ENCODE measurements at regions of chr19 and their contacts with region 1.

Region 1: DNA sequence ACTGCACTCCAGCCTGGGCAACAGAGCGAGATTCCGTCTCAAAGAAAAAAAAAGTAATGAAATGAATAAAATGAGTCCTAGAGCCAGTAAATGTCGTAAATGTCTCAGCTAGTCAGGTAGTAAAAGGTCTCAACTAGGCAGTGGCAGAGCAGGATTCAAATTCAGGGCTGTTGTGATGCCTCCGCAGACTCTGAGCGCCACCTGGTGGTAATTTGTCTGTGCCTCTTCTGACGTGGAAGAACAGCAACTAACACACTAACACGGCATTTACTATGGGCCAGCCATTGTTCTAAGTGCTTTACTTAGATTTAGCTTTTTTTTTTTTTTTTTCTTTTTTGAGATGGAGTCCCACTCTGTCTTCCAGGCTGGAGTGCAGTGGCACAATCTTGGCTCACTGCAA is 30.2 kb downstream of the CYP2F1 start:
- DNase-seq: peak; percentile 85 to 94
- ATAC-seq: peak; percentile 94
- H3K4me3 ChIP-seq: no peak overlapping the region
- H3K27ac ChIP-seq: no peak overlapping the region; a peak in 1 of 6 replicates
- H3K4me1 ChIP-seq: no peaks in the 10 kb centered on the region
- CTCF ChIP-seq: peak; percentile 99
- EP300 ChIP-seq: no peak
- POLR2A ChIP-seq: no peak
- RAD21 ChIP-seq: peak; percentile 99 to 100

Region 2: DNA sequence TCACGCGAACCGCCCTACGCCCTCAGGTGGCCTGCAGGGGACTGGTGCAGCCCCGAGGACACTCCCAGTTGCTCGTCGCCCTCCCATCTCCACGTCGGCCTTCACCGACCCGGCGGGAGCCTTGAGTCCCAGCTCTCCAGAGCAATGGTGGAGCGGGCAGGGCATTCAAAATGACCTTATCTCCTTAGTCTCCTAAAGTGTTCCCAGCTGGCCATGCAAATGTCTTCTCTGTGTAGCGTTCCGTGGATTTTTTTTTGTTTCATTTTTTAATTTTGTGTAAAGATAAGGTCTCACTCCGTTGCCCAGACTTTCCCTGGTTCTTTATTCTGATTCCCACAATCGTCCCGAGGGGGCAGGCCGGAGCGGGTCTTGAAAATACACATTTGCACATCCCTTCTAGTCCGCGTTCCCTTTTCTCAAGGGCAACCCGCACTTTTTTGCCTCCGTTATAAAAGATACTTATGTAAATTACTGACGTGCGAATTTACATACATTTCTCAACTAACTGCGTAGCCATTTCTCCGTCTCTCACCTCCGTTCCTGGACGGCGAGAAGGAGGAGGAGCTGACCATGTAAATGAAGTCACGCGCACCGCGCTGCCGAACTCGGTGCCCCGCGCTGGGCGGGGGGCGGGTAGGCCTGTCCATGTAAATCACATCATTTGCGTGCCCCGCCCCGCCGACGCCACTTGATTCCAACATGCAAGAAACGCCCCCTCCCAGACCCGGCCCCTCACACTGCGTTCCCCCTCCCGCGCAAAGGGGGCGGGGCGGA is 346.0 kb before region 1 on chr19:
- CTCF ChIA-PET with region 1: interaction called, 13 read pairs
- POLR2A ChIA-PET with region 1: no interaction called
- DNase-seq: peak; percentile 99 to 100
- ATAC-seq: peak; percentile 86 to 92
- H3K4me3 ChIP-seq: peak overlapping the region; percentile 84
- H3K27ac ChIP-seq: peak overlapping the region; percentile 95 to 96
- H3K4me1 ChIP-seq: peaks cover 42% of the 10 kb centered on the region
- CTCF ChIP-seq: peak; percentile 67
- EP300 ChIP-seq: no peak
- POLR2A ChIP-seq: 0 out of 2 replicates have a peak, but pooled peaks have one; percentile 23
- RAD21 ChIP-seq: 0 out of 5 replicates have a peak, but pooled peaks have one; percentile 11 to 33

Region 3: GRCh38 chr19:40974633-40975037 is 169.8 kb before region 1 on chr19:
- CTCF ChIA-PET with region 1: interaction called, 19 read pairs
- POLR2A ChIA-PET with region 1: no interaction called
- DNase-seq: peak; percentile 89 to 90
- ATAC-seq: peak; percentile 81 to 96; a peak in 5 of 6 replicates
- H3K4me3 ChIP-seq: no peak overlapping the region
- H3K27ac ChIP-seq: no peak overlapping the region
- H3K4me1 ChIP-seq: no peaks in the 10 kb centered on the region
- CTCF ChIP-seq: peak; percentile 99
- EP300 ChIP-seq: no peak
- POLR2A ChIP-seq: no peak
- RAD21 ChIP-seq: peak; percentile 85 to 87

Region 4: GRCh38 chr19:41112728-41113290 is 31.6 kb before region 1 on chr19:
- CTCF ChIA-PET with region 1: interaction called, 11 read pairs
- POLR2A ChIA-PET with region 1: no interaction called
- DNase-seq: no peak
- ATAC-seq: no peak
- H3K4me3 ChIP-seq: no peak overlapping the region
- H3K27ac ChIP-seq: no peak overlapping the region
- H3K4me1 ChIP-seq: no peaks in the 10 kb centered on the region
- CTCF ChIP-seq: no peak
- EP300 ChIP-seq: no peak
- POLR2A ChIP-seq: no peak
- RAD21 ChIP-seq: no peak

Region 5: DNA sequence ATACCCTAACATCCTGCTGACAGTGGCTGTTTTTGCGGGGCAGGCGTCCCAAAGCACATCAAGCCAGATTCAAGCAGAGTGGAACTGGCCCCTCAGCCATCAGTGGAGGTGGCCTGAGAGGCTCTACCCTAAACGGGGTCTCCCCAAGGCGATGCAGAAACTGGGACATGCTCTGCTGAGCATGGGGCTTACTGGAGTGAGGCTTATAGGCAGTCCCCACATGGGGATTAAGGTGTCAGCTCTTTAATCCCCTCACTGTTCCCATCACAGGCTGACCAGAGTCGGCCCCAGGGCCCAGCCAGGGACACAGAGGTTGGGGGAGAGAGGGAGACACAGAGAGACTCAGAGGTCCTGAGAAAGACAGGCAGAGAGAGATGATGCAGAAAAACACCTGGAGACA is 13.2 kb before region 1 on chr19:
- CTCF ChIA-PET with region 1: interaction called, 56 read pairs
- POLR2A ChIA-PET with region 1: no interaction called
- DNase-seq: no peak
- ATAC-seq: no peak
- H3K4me3 ChIP-seq: no peak overlapping the region
- H3K27ac ChIP-seq: no peak overlapping the region; a peak in 1 of 6 replicates
- H3K4me1 ChIP-seq: peaks cover 15% of the 10 kb centered on the region
- CTCF ChIP-seq: no peak
- EP300 ChIP-seq: no peak
- POLR2A ChIP-seq: no peak
- RAD21 ChIP-seq: no peak

Region 6: GRCh38 chr19:41166944-41167804 is 22.8 kb after region 1 on chr19:
- CTCF ChIA-PET with region 1: interaction called, 49 read pairs
- POLR2A ChIA-PET with region 1: no interaction called
- DNase-seq: no peak
- ATAC-seq: no peak; a peak in 2 of 6 replicates
- H3K4me3 ChIP-seq: no peak overlapping the region
- H3K27ac ChIP-seq: no peak overlapping the region
- H3K4me1 ChIP-seq: peaks cover 4% of the 10 kb centered on the region; the same call in 2 of the 3 replicates
- CTCF ChIP-seq: no peak
- EP300 ChIP-seq: no peak
- POLR2A ChIP-seq: no peak
- RAD21 ChIP-seq: no peak

Region 7: DNA sequence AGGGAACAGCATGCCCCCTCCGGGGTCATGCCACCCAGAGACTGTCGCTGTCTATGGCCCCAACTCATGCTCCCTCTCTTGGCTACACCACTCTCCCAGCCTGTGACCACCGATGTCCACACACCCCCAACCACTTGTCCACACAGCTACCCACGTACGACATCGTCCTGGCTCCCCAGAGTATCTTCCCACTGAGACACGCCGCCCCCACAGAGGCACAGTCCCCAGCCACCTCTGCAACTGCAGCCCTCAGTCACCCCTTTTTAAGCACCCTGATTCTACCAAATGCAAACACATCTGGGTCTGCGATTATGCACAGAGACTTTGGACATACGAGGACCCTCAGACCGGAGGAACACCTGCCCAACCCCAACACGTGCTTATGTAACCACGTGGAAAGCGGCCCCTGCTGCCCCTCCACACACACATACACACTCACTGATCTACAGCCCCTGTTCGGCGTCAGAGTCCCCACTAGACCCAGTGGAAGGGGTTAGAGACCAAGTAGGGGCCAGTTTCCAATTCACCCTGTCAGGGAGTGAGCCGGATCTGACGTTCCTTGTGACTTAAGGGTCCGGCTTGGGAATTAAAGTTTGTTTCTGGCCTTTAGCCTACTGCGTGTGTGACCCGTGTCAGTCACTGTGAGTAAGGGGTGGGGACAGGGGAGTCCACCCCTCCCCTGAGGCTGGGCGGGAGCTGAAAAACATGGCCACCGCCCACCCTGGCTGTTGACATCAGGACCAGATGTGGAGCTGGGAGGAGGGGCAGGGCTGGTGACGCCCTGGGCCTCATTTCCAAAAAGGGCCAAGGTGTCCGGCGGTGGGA is 62.7 kb after region 1 on chr19:
- CTCF ChIA-PET with region 1: interaction called, 12 read pairs
- POLR2A ChIA-PET with region 1: no interaction called
- DNase-seq: no peak
- ATAC-seq: no peak
- H3K4me3 ChIP-seq: no peak overlapping the region
- H3K27ac ChIP-seq: no peak overlapping the region
- H3K4me1 ChIP-seq: no peaks in the 10 kb centered on the region
- CTCF ChIP-seq: no peak
- EP300 ChIP-seq: no peak
- POLR2A ChIP-seq: no peak
- RAD21 ChIP-seq: no peak

Measured in A549 (cell line).